ENCODE measurements at regions of chr16 and their contacts with region 1.

Region 1: GRCh38 chr16:31696968-31697743 is 169.5 kb downstream of the AHSP start:
- DNase-seq: no peak
- H3K4me3 ChIP-seq: no peak overlapping the region
- H3K27ac ChIP-seq: no peak overlapping the region
- H3K4me1 ChIP-seq: peaks cover 0 to 13% (median 8%) of the 10 kb centered on the region in 4 donors
- H3K27me3 ChIP-seq: no peaks in the 10 kb centered on the region
- CTCF ChIP-seq: peak; percentile 47 to 77 (median 53)
- EP300 ChIP-seq: no peak
- POLR2A ChIP-seq: no peak

Region 2: GRCh38 chr16:30429678-30430427 is 1267.3 kb before region 1 on chr16 and contains the start of gene DCTPP1:
- in situ Hi-C with region 1: no loop called
- intact Hi-C with region 1: no loop called
- DNase-seq: peak; percentile 97
- H3K4me3 ChIP-seq: peak within 1 kb of the TSS; percentile 51 to 70 (median 64)
- H3K27ac ChIP-seq: peak within 1 kb of the TSS; percentile 88 to 92 (median 90)
- H3K4me1 ChIP-seq: peaks cover 0 to 23% (median 17%) of the 10 kb centered on the region in 4 donors
- H3K27me3 ChIP-seq: no peaks in the 10 kb centered on the region
- CTCF ChIP-seq: peak; percentile 60 to 96 (median 84)
- EP300 ChIP-seq: no peak
- POLR2A ChIP-seq: peak; percentile 48
- total RNA-seq, gene DCTPP1: 35.2 to 74.1 (median 50.0) TPM

Region 3: DNA sequence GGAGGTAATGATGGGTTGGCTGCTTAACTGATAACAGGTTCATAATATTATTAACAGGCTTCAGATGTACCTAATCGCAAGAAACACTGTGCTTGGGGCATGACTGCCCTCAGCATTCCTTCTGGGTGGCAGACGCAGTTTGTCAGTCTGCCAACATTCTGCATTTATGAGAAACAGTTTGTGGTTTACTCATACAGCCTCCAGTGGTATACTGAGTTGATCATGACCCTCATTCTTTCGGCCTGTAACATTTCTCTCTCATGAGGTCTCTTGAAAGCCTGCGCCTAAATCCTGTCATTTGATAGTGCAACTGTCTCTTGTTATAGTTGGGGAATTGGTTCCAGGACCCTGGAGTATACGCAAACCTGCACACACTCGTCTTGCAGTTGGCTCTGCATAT is 184.0 kb before region 1 on chr16:
- in situ Hi-C with region 1: loop called in 1 of 4 experiments (anchors 10 kb)
- intact Hi-C with region 1: no loop called
- DNase-seq: no peak
- H3K4me3 ChIP-seq: no peak overlapping the region
- H3K27ac ChIP-seq: no peak overlapping the region
- H3K4me1 ChIP-seq: peaks cover 7 to 14% (median 10%) of the 10 kb centered on the region in 4 donors
- H3K27me3 ChIP-seq: no peaks in the 10 kb centered on the region
- CTCF ChIP-seq: no peak
- EP300 ChIP-seq: no peak
- POLR2A ChIP-seq: no peak